ENCODE measurements at regions of chr15 and their contacts with region 1.

Region 1: GRCh38 chr15:88657326-88658069 is 18.7 kb downstream of the ISG20 start:
- DNase-seq: peak; percentile 55
- H3K4me3 ChIP-seq: no peak overlapping the region
- H3K27ac ChIP-seq: no peak overlapping the region
- H3K4me1 ChIP-seq: peaks cover 49% of the 10 kb centered on the region
- H3K27me3 ChIP-seq: no peaks in the 10 kb centered on the region
- CTCF ChIP-seq: peak; percentile 94

Region 2: GRCh38 chr15:88586401-88587162 is 70.9 kb before region 1 on chr15:
- CTCF ChIA-PET with region 1: no interaction called
- dilution Hi-C with region 1: no loop called
- in situ Hi-C with region 1: no loop called
- intact Hi-C with region 1: no loop called
- DNase-seq: peak; percentile 58
- H3K4me3 ChIP-seq: no peak overlapping the region
- H3K27ac ChIP-seq: no peak overlapping the region
- H3K4me1 ChIP-seq: no peaks in the 10 kb centered on the region
- H3K27me3 ChIP-seq: peaks cover 4% of the 10 kb centered on the region
- CTCF ChIP-seq: no peak

Region 3: DNA sequence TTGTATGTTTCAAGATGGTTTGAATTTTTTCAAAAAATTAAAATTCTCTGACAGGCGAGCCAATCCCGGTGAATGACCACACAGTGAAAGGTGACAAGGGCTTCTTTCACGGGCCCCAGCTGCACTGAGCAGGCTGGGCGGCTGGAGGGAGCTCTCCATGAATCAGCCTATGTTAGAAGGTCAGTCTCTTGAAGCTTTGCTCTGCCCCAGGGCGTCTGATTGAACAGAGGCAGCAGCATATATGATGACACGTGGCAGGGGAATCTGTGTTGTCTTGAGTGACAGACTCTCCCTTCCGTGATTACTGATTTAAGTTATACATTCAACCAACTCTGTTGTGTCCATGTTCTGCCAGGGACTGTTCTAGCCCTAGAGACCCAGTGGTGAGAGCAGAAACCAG is 32.8 kb after region 1 on chr15:
- CTCF ChIA-PET with region 1: interaction called, 16 read pairs
- dilution Hi-C with region 1: no loop called
- in situ Hi-C with region 1: no loop called
- intact Hi-C with region 1: no loop called
- DNase-seq: peak; percentile 18
- H3K4me3 ChIP-seq: no peak overlapping the region
- H3K27ac ChIP-seq: no peak overlapping the region
- H3K4me1 ChIP-seq: no peaks in the 10 kb centered on the region
- H3K27me3 ChIP-seq: peaks cover 1% of the 10 kb centered on the region
- CTCF ChIP-seq: no peak

Region 4: DNA sequence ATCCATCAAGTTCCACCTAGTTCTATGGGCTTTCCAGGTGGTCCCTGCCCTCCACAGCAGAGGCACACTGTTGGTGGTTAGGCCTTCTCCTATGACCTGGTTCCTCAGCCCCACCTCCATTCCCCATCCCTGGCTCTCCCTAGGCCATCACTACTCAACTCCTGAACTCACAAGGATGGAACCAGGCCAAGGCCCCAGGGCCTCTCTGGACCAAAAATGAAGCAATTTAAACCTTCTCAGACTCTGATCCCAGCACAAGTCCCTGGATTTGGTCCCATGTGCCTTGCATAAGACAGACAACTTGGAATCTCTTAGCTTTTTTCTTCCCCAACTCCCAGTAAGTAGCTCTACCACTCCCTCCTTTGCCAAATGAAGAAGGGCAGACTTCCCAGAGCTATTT is 131.3 kb after region 1 on chr15:
- CTCF ChIA-PET with region 1: no interaction called
- dilution Hi-C with region 1: loop called (anchors 10 kb)
- in situ Hi-C with region 1: no loop called
- intact Hi-C with region 1: no loop called
- DNase-seq: no peak
- H3K4me3 ChIP-seq: no peak overlapping the region
- H3K27ac ChIP-seq: no peak overlapping the region
- H3K4me1 ChIP-seq: peaks cover 32% of the 10 kb centered on the region
- H3K27me3 ChIP-seq: no peaks in the 10 kb centered on the region
- CTCF ChIP-seq: no peak

Region 5: DNA sequence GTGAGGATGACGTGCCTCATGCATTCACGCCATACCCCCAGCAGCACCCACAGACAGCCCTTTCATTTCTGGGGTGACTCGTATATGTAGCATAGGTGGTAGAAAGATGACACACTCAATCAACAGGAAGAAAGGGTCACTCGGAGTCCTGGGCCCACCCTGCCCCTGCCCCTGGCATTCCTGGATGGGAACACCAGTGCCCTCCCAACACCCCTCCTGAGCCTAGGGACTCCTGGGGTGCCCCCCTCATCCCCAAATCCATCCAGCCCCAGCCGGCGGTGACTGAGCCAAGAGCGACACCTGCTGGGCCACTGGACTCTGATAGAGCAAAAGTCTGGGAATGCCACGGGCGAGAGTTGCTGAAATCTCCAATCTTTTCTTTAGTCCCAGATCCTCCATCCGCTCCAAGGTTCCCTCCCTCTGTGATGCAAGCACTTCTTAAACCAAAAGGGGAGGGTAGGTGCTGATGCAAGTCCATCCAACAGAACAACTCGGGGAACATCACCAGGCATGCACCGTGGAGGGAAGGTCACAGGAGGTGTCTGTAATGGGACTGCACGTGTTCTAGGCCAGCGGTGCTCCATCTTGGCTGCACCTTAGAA is 176.8 kb after region 1 on chr15:
- CTCF ChIA-PET with region 1: no interaction called
- dilution Hi-C with region 1: no loop called
- in situ Hi-C with region 1: loop called in 1 of 2 experiments (anchors 25 kb)
- intact Hi-C with region 1: loop called (anchors 1 kb)
- DNase-seq: peak; percentile 81
- H3K4me3 ChIP-seq: no peak overlapping the region
- H3K27ac ChIP-seq: no peak overlapping the region
- H3K4me1 ChIP-seq: peaks cover 20% of the 10 kb centered on the region
- H3K27me3 ChIP-seq: no peaks in the 10 kb centered on the region
- CTCF ChIP-seq: peak; percentile 48 to 70

Region 6: GRCh38 chr15:88897456-88898194 is 240.1 kb after region 1 on chr15:
- CTCF ChIA-PET with region 1: no interaction called
- dilution Hi-C with region 1: no loop called
- in situ Hi-C with region 1: no loop called
- intact Hi-C with region 1: loop called (anchors 1 kb)
- DNase-seq: peak; percentile 81
- H3K4me3 ChIP-seq: no peak overlapping the region
- H3K27ac ChIP-seq: no peak overlapping the region
- H3K4me1 ChIP-seq: peaks cover 18% of the 10 kb centered on the region
- H3K27me3 ChIP-seq: no peaks in the 10 kb centered on the region
- CTCF ChIP-seq: peak; percentile 38 to 74

Region 7: DNA sequence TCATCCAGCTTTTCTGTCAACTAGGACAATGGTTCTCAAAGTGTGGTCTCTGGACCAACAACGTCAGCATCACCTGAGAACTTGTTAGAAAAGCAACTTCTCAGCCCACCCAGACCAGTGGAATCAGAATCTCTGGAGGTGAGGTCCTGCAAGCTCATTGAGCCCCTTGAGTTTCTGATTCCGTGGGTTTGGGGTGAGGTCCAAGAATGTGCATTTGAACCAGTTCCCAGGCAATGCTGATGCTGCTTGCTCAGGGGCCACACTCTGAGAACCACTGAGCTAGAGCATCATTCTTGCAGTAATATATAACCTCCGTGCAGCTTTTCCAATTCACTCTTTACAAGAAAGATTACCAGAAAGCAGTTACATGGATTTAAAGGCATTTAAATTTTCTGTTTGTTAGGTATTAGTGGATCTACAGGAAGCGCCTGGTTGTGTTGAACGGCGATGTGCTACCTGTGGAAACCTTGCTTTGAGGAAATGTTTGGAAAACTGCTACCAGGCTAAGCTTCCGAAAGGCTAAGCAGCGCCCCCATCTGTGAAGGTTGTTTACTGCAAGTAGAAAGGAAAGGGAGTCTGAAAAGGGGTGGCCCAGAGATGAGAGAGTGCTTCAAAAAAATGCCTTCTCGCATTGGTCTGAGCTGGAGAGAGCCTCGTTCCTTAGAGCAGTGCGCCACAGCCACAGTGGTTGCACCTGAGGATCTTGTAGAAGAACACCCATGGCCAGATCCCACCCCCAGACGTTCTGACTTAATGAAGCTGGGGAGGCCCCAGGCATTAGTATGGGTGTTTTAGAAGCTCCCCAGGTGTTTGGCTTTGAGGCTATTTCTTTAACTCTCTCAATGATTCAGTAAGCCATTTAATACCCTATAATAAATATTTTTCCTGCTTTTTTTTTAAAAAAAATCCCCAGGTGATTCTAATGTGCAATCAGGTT is 513.9 kb after region 1 on chr15:
- CTCF ChIA-PET with region 1: no interaction called
- dilution Hi-C with region 1: loop called (anchors 25 kb)
- in situ Hi-C with region 1: no loop called
- intact Hi-C with region 1: loop called (anchors 5 kb)
- DNase-seq: no peak
- H3K4me3 ChIP-seq: no peak overlapping the region
- H3K27ac ChIP-seq: no peak overlapping the region
- H3K4me1 ChIP-seq: peaks cover 30% of the 10 kb centered on the region
- H3K27me3 ChIP-seq: no peaks in the 10 kb centered on the region
- CTCF ChIP-seq: peak; percentile 73 to 86

Region 8: GRCh38 chr15:89221543-89221942 is 564.0 kb after region 1 on chr15 and contains the start of gene RLBP1:
- CTCF ChIA-PET with region 1: no interaction called
- dilution Hi-C with region 1: no loop called
- in situ Hi-C with region 1: no loop called
- intact Hi-C with region 1: no loop called
- DNase-seq: peak; percentile 15
- H3K4me3 ChIP-seq: no peak within 1 kb of the TSS
- H3K27ac ChIP-seq: no peak within 1 kb of the TSS
- H3K4me1 ChIP-seq: no peaks in the 10 kb centered on the region
- H3K27me3 ChIP-seq: peaks cover 3% of the 10 kb centered on the region
- CTCF ChIP-seq: no peak
- total RNA-seq, gene RLBP1: 0.17 TPM in 1 of 2 donors, not detected in the other

Measured in mammary epithelial cell (primary cell).